Right ventricle myocardium inferior (tissue), 1 donor: ENCODE measurements at regions of chr3 and their contacts with region 1.

Region 1: DNA sequence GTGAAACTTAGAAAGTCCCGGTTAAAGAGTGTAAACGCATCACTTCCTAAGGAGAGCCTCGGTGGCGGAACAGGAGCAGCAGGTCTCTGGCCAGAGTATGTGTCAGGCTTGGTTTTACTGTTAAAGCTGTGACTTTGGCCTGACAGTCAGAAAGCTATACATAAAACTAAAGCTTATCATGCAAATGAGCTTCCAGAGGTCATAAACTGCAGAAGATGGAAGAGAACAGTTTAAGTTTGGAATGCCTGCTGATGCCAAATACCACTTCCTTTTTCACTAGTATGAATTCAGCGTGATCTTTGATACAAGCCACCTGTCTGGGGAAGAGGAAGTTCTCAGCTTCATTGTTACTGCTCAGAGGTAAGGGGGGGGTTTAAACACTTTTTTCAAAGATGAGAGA is 125.1 kb upstream of the CTDSPL start:
- DNase-seq: no peak
- ATAC-seq: no peak

Region 2: GRCh38 chr3:37689645-37690356 is 46.8 kb before region 1 on chr3:
- intact Hi-C with region 1: loop called (anchors 1 kb)
- DNase-seq: no peak
- ATAC-seq: peak; percentile 95

Region 3: DNA sequence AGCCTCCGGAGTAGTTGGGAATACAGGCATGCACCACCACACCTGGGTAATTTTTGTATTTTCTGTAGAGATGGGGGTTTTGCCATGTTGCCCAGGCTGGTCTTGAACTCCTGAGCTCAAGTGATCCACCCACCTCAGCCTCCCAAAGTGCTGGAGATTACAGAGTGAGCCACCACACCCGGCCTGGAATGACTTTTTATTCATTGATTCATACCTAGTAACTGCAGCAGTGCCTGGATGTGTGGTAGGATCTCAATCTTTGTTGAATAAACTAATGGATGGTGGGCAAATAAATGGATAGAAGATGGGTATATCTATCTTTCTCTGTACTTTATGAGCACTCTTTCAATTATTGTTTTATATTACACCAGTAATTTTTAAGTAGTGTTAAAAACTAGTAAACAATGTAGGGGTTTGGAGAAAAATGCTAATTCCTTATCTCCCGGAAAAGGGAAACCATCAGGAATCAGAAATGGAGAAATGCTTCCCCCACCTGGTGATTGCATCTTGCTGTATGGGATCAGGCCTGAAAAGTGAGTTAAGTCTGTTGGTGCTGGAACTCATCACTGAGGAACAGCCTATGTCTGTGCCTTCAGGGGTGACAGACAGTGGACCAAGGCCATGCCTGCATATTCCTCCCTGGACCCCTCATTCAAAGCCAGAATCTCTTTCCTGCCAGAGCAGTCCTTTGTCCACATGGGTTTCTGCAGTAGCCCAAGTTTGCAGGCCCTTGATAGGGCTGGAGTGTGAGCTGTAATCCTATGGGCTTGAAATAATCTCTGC is 36.0 kb before region 1 on chr3:
- intact Hi-C with region 1: no loop called
- DNase-seq: no peak
- ATAC-seq: no peak

Region 4: GRCh38 chr3:37779289-37780152 is 42.9 kb after region 1 on chr3:
- intact Hi-C with region 1: no loop called
- DNase-seq: no peak
- ATAC-seq: peak; percentile 73